ENCODE measurements at regions of chr16 and their contacts with region 1.

Region 1: DNA sequence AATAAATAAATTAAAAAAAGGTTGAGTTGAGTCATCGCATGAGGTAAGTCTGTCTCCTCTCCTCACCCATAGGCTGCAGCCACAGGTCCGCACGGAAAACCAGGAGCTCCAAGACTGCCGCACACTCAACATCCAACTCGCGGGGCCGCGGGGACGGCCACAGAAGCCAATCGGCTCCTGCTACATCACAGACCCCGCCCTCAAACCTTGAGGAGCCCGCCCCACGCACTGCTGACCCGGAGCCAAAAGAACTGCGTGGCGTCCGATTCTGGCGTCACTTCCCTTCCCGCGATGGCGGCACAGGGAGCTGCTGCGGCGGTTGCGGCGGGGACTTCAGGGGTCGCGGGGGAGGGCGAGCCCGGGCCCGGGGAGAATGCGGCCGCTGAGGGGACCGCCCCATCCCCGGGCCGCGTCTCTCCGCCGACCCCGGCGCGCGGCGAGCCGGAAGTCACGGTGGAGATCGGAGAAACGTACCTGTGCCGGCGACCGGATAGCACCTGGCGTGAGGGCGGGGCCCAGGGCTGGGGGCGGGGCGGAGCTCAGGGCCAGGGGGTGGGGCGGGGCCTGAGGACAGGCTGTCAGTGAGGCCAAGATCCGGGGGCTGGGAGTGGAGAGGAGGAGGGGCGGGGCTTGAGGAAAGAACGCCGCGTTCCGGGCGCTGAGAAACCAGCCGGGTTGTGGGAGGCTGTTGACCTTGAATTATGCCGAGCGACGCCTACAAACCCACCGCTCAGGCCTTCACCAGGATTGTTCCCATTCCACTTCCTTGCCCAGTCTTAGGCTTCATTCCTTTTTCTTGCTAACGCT is at the start of gene KAT8:
- DNase-seq: peak; percentile 98 to 99
- ATAC-seq: peak; percentile 93 to 97 (median 94)
- H3K4me3 ChIP-seq: peak within 1 kb of the TSS; percentile 44 to 87 (median 74)
- H3K27ac ChIP-seq: peak within 1 kb of the TSS; percentile 91 to 98 (median 96)
- H3K4me1 ChIP-seq: peaks cover 10 to 62% (median 39%) of the 10 kb centered on the region in 9 donors
- H3K27me3 ChIP-seq: no peaks in the 10 kb centered on the region
- CTCF ChIP-seq: no peak
- total RNA-seq, gene KAT8: 51.9 to 79.9 (median 66.0) TPM

Region 2: DNA sequence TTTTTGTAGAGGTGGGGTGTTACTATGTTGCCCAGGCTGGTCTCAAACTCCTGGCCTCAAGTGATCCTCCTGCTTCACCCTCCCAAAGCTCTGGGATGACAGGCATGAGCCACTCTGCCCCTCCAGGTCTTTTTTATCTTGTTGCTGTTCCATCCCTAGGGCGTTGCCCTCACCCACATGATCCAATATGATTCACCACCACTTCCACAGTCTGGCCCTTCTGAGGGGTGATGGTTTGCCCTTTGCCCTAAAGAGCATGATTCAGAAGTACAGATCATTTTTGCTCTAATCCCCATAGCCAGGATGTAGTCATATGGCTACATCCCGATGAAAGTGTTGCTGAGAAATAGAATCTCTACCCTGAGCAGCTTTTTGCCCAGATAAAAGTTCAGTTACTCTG is 65.5 kb before region 1 on chr16:
- intact Hi-C with region 1: no loop called
- DNase-seq: no peak
- ATAC-seq: peak in 1 of 8 donors; percentile 86
- H3K4me3 ChIP-seq: no peak overlapping the region
- H3K27ac ChIP-seq: peak overlapping the region in 1 of 10 donors; percentile 59
- H3K4me1 ChIP-seq: peaks cover 0 to 17% (median 0%) of the 10 kb centered on the region in 9 donors
- H3K27me3 ChIP-seq: no peaks in the 10 kb centered on the region
- CTCF ChIP-seq: no peak

Region 3: GRCh38 chr16:31084616-31085260 is 32.9 kb before region 1 on chr16:
- intact Hi-C with region 1: no loop called
- DNase-seq: no peak
- ATAC-seq: peak in 2 of 8 donors; percentile 16 to 22
- H3K4me3 ChIP-seq: no peak overlapping the region
- H3K27ac ChIP-seq: no peak overlapping the region
- H3K4me1 ChIP-seq: peaks cover 0 to 16% (median 6%) of the 10 kb centered on the region in 9 donors
- H3K27me3 ChIP-seq: no peaks in the 10 kb centered on the region
- CTCF ChIP-seq: no peak

Region 4: GRCh38 chr16:31148281-31148771 is 30.7 kb after region 1 on chr16:
- intact Hi-C with region 1: no loop called
- DNase-seq: no peak
- ATAC-seq: peak in 3 of 8 donors; percentile 18 to 20 (median 20)
- H3K4me3 ChIP-seq: peak overlapping the region in 1 of 10 donors; percentile 11
- H3K27ac ChIP-seq: no peak overlapping the region
- H3K4me1 ChIP-seq: peaks cover 0 to 15% (median 0%) of the 10 kb centered on the region in 9 donors
- H3K27me3 ChIP-seq: peaks cover 0 to 25% (median 13%) of the 10 kb centered on the region in 7 donors
- CTCF ChIP-seq: no peak

Region 5: DNA sequence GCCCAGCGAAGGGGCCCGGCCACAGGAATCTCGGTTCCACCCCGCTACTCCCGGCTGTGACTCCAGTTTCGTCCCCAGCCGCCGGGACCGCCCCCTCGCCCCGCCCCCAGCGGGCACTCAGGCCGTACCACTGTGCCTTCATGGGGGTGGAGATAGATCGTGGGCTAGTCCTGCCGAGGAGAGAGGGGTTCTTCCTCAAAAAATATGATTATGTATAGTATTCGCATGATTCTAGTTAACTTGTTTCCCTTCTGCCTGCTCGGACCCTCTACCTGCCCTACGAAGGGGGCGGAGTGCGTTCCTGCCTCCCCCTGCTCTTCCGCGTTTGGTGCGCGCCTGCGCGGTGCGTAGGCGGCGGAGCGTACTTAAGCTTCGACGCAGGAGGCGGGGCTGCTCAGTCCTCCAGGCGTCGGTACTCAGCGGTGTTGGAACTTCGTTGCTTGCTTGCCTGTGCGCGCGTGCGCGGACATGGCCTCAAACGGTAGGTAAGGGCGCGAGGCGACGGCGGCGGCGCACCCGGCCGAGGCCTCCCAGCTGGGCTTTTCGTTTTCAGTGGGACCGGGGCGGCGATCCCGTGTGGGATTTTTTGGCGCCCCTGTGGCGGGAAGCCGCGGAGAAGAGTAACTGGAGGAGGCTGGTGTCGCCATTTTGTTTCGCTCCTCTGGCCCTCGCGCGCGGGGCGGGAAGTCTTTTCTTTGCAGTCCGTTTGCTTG is 62.3 kb after region 1 on chr16 and contains the start of gene FUS:
- intact Hi-C with region 1: loop called in 1 of 10 experiments (anchors 5 kb)
- DNase-seq: peak; percentile 90 to 92
- ATAC-seq: peak; percentile 84 to 93 (median 90)
- H3K4me3 ChIP-seq: peak within 1 kb of the TSS; percentile 71 to 94 (median 83)
- H3K27ac ChIP-seq: peak within 1 kb of the TSS; percentile 89 to 99 (median 94)
- H3K4me1 ChIP-seq: peaks cover 10 to 57% (median 42%) of the 10 kb centered on the region in 9 donors
- H3K27me3 ChIP-seq: no peaks in the 10 kb centered on the region
- CTCF ChIP-seq: no peak
- total RNA-seq, gene FUS: 127 to 174 (median 140) TPM